ENCODE measurements at regions of chr6 and their contacts with region 1.

Region 1: DNA sequence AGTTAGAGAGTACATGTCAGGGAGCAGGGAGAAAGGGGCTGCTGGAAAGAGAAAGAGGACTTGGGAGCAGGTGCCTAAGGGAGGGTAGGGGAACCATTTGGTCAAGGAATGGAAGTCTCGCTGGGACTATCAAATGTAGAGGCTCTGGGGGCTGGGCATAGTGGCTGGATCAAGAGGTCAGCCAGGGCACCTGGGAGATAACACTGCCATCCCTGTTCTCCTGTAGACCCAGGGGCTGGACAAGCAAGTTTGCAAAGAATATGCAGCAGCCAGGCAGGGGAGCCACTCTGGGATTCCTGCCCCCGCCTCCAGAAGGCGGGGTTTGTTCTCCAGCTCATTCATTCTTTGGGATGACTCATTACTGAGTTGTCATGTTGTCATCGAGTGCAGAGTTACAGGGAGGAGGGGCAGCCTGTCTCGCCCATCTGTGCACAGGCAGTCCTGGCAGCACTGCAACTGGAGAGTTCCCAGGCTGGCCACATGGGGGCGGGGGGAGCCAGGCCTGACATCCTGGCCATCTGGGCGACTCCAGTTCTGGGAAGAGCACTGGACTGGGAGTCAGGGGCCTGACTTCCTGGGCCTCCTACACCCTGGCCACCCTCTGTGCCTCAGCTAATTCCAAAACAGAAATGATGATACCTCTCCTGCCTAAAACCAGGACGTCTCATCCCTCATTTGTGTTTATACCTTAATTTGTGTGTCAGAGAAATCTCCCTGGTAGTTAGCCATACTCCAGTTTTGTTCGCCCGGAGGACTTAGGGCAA is 28.2 kb upstream of the ZFAND3 start:
- DNase-seq: peak; percentile 53
- ATAC-seq: peak; percentile 100
- H3K4me3 ChIP-seq: no peak overlapping the region
- H3K27ac ChIP-seq: no peak overlapping the region
- H3K4me1 ChIP-seq: no peaks in the 10 kb centered on the region
- H3K27me3 ChIP-seq: no peaks in the 10 kb centered on the region
- CTCF ChIP-seq: peak; percentile 92 to 98 (median 95)
- EP300 ChIP-seq: no peak
- POLR2A ChIP-seq: no peak
- RAD21 ChIP-seq: peak; percentile 89

Region 2: GRCh38 chr6:37705239-37706051 is 85.9 kb before region 1 on chr6:
- CTCF ChIA-PET with region 1: interaction called, 11 read pairs
- POLR2A ChIA-PET with region 1: interaction called, 4 read pairs
- RAD21 ChIA-PET with region 1: interaction called, 10 read pairs
- SMC1A ChIA-PET with region 1: interaction called, 5 read pairs
- in situ Hi-C with region 1: no loop called
- intact Hi-C with region 1: loop called (anchors 1 kb)
- DNase-seq: peak; percentile 30
- ATAC-seq: peak; percentile 94
- H3K4me3 ChIP-seq: peak overlapping the region; percentile 38
- H3K27ac ChIP-seq: no peak overlapping the region; the same call in 1 of the 2 replicates
- H3K4me1 ChIP-seq: peaks cover 5% of the 10 kb centered on the region
- H3K27me3 ChIP-seq: peaks cover 0 to 3% of the 10 kb centered on the region in 2 experiments; a peak in 1 of 4 replicates
- CTCF ChIP-seq: peak; percentile 73 to 77 (median 75)
- EP300 ChIP-seq: no peak
- POLR2A ChIP-seq: peak; percentile 40
- RAD21 ChIP-seq: peak; percentile 64

Region 3: GRCh38 chr6:37745748-37746147 is 45.6 kb before region 1 on chr6:
- CTCF ChIA-PET with region 1: no interaction called
- POLR2A ChIA-PET with region 1: no interaction called
- RAD21 ChIA-PET with region 1: no interaction called
- SMC1A ChIA-PET with region 1: no interaction called
- in situ Hi-C with region 1: no loop called
- intact Hi-C with region 1: no loop called
- DNase-seq: no peak
- ATAC-seq: no peak
- H3K4me3 ChIP-seq: no peak overlapping the region
- H3K27ac ChIP-seq: no peak overlapping the region
- H3K4me1 ChIP-seq: no peaks in the 10 kb centered on the region
- H3K27me3 ChIP-seq: peaks cover 2 to 5% of the 10 kb centered on the region in 2 experiments; a peak in 3 of 4 replicates
- CTCF ChIP-seq: no peak
- EP300 ChIP-seq: no peak
- POLR2A ChIP-seq: no peak
- RAD21 ChIP-seq: no peak

Region 4: GRCh38 chr6:37761554-37762263 is 29.6 kb before region 1 on chr6:
- CTCF ChIA-PET with region 1: interaction called, 10 read pairs
- POLR2A ChIA-PET with region 1: no interaction called
- RAD21 ChIA-PET with region 1: interaction called, 10 read pairs
- SMC1A ChIA-PET with region 1: interaction called, 8 read pairs
- in situ Hi-C with region 1: no loop called
- intact Hi-C with region 1: no loop called
- DNase-seq: no peak
- ATAC-seq: peak; percentile 81
- H3K4me3 ChIP-seq: no peak overlapping the region
- H3K27ac ChIP-seq: no peak overlapping the region
- H3K4me1 ChIP-seq: no peaks in the 10 kb centered on the region
- H3K27me3 ChIP-seq: no peaks in the 10 kb centered on the region
- CTCF ChIP-seq: no peak
- EP300 ChIP-seq: no peak; a peak in 1 of 4 replicates
- POLR2A ChIP-seq: no peak
- RAD21 ChIP-seq: no peak

Region 5: DNA sequence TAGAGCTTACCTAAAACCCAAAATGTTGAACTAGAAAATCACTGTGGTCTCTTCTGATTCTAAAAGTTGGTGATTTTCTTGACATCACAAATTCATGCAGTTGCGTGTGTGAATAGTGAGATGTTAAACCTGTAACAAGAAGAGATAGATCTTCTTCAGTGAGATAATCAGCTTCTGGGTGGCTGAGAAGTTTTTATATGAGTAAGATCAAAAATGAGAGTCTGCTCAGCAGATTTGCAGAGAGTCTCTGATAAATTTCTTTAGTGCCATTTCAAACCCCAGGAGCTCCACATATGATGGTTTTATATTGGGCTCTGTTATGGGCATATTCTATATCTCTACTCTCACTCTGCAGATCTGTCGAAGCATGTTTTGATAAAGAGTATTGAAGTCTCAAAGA is 213.6 kb after region 1 on chr6:
- CTCF ChIA-PET with region 1: interaction called, 24 read pairs
- POLR2A ChIA-PET with region 1: no interaction called
- RAD21 ChIA-PET with region 1: interaction called, 3 read pairs
- SMC1A ChIA-PET with region 1: interaction called, 13 read pairs
- in situ Hi-C with region 1: loop called (anchors 5 kb)
- intact Hi-C with region 1: no loop called
- DNase-seq: no peak
- ATAC-seq: no peak; the same call in 2 of the 3 replicates
- H3K4me3 ChIP-seq: no peak overlapping the region
- H3K27ac ChIP-seq: no peak overlapping the region
- H3K4me1 ChIP-seq: 0 out of 2 replicates have a peak, but pooled peaks cover 3% of the 10 kb centered on the region
- H3K27me3 ChIP-seq: no peaks in the 10 kb centered on the region
- CTCF ChIP-seq: no peak
- EP300 ChIP-seq: no peak
- POLR2A ChIP-seq: no peak
- RAD21 ChIP-seq: no peak

Region 6: DNA sequence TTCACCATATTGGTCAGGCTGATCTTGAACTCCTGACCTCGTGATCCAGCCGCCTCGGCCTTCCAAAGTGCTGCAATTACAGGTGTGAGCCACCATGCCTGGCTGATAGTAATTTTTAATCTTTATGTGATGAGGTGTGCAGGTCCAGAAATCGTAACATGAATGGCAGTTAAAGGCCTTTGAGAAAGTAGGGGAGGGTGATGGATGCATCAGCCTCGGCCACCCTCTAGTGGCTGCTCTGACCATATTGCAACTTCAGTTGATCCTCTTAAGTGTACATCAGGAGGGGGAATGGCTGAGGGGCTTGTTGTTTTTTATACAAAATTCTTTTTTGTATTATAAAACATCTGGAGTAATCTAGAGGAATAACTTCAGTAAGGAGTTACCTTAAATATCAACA is 221.2 kb after region 1 on chr6:
- CTCF ChIA-PET with region 1: interaction called, 24 read pairs
- POLR2A ChIA-PET with region 1: no interaction called
- RAD21 ChIA-PET with region 1: interaction called, 6 read pairs
- SMC1A ChIA-PET with region 1: interaction called, 13 read pairs
- in situ Hi-C with region 1: loop called (anchors 5 kb)
- intact Hi-C with region 1: loop called (anchors 1 kb)
- DNase-seq: no peak
- ATAC-seq: peak; percentile 94
- H3K4me3 ChIP-seq: no peak overlapping the region
- H3K27ac ChIP-seq: no peak overlapping the region
- H3K4me1 ChIP-seq: no peaks in the 10 kb centered on the region
- H3K27me3 ChIP-seq: no peaks in the 10 kb centered on the region
- CTCF ChIP-seq: peak; percentile 72 to 85 (median 76)
- EP300 ChIP-seq: no peak
- POLR2A ChIP-seq: no peak
- RAD21 ChIP-seq: peak; percentile 90

Region 7: DNA sequence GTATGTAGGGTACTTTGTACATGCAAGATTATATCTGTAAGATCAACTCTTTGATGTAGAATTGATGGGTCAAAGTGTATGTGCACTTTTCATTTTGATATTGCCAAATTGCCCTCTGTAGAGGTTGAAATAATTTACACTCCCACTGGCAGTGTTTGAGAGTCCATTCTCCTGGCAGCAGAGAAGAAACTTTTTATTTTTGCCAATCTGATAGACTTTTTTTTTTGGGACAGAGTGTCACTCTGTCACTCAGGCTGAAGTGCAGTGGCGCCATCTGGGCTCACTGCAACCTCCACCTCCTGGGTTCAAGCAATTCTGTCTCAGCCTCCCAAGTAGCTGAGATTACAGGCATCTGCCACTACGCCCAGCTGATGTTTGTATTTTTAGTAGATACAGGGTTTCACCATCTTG is 227.4 kb after region 1 on chr6:
- CTCF ChIA-PET with region 1: interaction called, 10 read pairs
- POLR2A ChIA-PET with region 1: no interaction called
- RAD21 ChIA-PET with region 1: no interaction called
- SMC1A ChIA-PET with region 1: interaction called, 10 read pairs
- in situ Hi-C with region 1: no loop called
- intact Hi-C with region 1: no loop called
- DNase-seq: no peak
- ATAC-seq: no peak
- H3K4me3 ChIP-seq: no peak overlapping the region
- H3K27ac ChIP-seq: no peak overlapping the region
- H3K4me1 ChIP-seq: no peaks in the 10 kb centered on the region
- H3K27me3 ChIP-seq: no peaks in the 10 kb centered on the region
- CTCF ChIP-seq: 0 out of 6 replicates have a peak, but pooled peaks of 1 of the 3 experiments have one; percentile 1
- EP300 ChIP-seq: no peak
- POLR2A ChIP-seq: no peak
- RAD21 ChIP-seq: no peak